Ascending aorta (tissue), 2 donors: ENCODE measurements at regions of chr5 and their contacts with region 1.

Region 1: DNA sequence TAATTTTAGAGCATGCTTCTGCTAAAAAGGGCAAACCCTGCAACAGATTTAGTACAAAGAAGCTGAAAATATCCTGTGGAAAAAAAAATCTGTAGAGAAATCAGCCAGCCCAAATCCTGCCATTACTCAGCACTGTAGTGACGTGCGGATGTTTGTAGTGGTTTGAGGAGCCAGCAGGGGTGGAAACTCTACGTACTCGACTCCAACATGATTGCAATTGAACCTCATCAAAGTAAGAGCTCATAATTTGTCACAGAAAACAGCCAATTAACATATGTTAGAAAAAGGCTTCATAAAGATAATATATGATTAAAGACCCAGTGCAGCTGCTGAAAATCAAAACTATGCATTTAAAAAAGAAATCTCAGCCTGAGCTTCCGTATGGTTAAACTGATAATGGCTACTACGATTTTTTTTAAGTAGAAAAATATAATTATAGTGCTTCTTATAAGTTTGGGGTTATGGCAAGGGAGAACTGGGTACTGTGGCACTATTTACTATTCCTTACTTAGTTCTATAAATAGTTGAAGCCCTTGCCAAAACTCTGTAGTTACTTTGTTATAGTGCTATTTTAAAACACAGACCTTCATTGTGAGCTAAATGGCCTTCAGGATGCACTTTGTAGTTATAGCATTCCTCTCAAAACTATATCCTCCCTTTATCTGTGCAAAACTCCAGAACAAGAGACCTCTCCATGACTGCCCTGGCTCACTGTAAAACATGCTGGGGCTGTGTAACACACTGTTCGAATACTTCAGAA is 49.4 kb downstream of the MEF2C start:
- DNase-seq: peak; percentile 29 to 89
- H3K4me3 ChIP-seq: peak overlapping the region; percentile 28 to 50
- H3K27ac ChIP-seq: peak overlapping the region; percentile 88 to 91
- H3K4me1 ChIP-seq: peaks cover 3 to 52% of the 10 kb centered on the region in 2 donors
- H3K27me3 ChIP-seq: no peaks in the 10 kb centered on the region
- CTCF ChIP-seq: no peak

Region 2: DNA sequence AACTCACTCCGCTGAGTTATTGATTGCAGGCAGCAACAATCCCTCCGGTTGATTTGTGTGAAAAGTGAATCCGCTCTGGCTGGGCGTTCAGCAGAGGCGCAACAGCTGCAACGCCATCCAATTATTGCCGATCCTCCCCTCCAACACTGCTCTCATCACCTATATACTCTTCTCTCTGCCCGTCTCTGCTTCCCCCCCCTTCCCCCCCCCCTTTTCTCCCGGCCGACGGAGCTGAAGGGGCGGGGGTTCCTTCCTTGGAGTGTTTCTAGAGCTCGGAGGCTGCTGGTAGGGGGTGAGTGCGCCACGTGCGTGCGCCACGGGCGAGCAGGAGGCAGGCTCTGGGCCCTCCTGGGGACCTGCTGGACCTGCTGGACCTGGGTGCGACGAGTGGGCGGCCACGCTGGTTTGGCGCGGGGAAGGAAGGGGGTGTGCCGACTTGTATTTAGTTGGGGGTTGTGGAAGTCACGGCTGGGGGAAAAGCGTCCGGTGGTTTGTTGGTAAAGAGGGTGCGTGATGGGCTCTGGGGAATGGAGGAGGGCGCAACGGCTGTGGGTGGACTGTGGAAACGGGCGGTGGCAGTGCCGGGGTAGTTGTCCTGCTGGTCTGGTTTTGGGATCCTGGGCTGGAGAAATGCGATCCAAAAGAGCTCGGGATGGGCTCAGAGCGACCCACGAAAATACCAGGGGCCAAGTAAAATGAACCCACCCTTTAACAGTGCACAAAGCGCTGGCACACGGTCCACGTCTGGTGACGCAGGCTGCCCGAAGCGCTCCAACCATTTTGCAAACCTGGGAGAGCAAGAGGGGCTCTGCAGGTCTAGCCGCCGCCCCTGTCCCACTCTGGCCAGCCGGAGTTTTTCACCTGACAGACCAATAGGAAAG is 55.9 kb after region 1 on chr5:
- intact Hi-C with region 1: no loop called
- DNase-seq: peak; percentile 35 to 85
- H3K4me3 ChIP-seq: peak overlapping the region; percentile 72 to 83
- H3K27ac ChIP-seq: peak overlapping the region; percentile 90 to 95
- H3K4me1 ChIP-seq: peaks cover 0 to 4% of the 10 kb centered on the region in 2 donors
- H3K27me3 ChIP-seq: no peaks in the 10 kb centered on the region
- CTCF ChIP-seq: no peak

Region 3: DNA sequence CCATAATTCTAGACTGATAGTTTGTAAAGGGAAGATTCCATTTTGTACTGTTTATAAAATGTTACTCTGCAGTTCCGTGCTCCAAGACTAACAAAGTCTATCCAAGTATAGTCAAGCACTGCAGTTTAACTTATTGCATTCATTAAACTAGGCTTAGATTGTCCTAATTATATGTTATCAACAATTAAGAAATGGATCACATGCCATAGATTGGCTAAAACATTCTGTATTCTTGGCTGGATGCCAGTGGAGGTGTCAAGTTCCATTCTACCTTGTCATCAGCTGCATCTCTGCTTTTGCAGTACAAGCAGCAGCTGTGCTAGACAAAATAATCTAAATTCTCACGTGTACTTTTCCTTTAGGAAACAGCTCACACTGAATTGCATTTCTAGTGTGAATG is 118.8 kb after region 1 on chr5:
- intact Hi-C with region 1: loop called (anchors 5 kb)
- DNase-seq: no peak
- H3K4me3 ChIP-seq: peak overlapping the region in 1 of 2 donors; percentile 13
- H3K27ac ChIP-seq: peak overlapping the region; percentile 31 to 58
- H3K4me1 ChIP-seq: peaks cover 4 to 21% of the 10 kb centered on the region in 2 donors
- H3K27me3 ChIP-seq: no peaks in the 10 kb centered on the region
- CTCF ChIP-seq: no peak